GM12878 (cell line): ENCODE measurements at regions of chr19 and their contacts with region 1.

Region 1: GRCh38 chr19:45730389-45731288 is at the start of gene FBXO46:
- DNase-seq: peak; percentile 96
- ATAC-seq: peak; percentile 98
- H3K4me3 ChIP-seq: peak within 1 kb of the TSS; percentile 97
- H3K27ac ChIP-seq: peak within 1 kb of the TSS; percentile 90
- H3K4me1 ChIP-seq: peaks cover 4% of the 10 kb centered on the region; the same call in 1 of the 2 replicates
- H3K27me3 ChIP-seq: no peaks in the 10 kb centered on the region
- CTCF ChIP-seq: peak; percentile 28 to 40 (median 35); a peak in 5 of 6 replicates
- EP300 ChIP-seq: no peak
- POLR2A ChIP-seq: peak; percentile 87
- RAD21 ChIP-seq: peak; percentile 31; the same call in 1 of the 2 replicates
- polyA plus RNA-seq, gene FBXO46: 2.5 to 7.1 TPM

Region 2: GRCh38 chr19:44912854-44913253 is 817.8 kb before region 1 on chr19:
- CTCF ChIA-PET with region 1: no interaction called
- POLR2A ChIA-PET with region 1: no interaction called
- RAD21 ChIA-PET with region 1: no interaction called
- SMC1A ChIA-PET with region 1: no interaction called
- in situ Hi-C with region 1: no loop called
- intact Hi-C with region 1: no loop called
- DNase-seq: no peak
- ATAC-seq: no peak
- H3K4me3 ChIP-seq: no peak overlapping the region
- H3K27ac ChIP-seq: no peak overlapping the region
- H3K4me1 ChIP-seq: 0 out of 2 replicates have a peak, but pooled peaks cover 3% of the 10 kb centered on the region
- H3K27me3 ChIP-seq: no peaks in the 10 kb centered on the region; a peak in 1 of 4 replicates
- CTCF ChIP-seq: no peak
- EP300 ChIP-seq: no peak
- POLR2A ChIP-seq: no peak
- RAD21 ChIP-seq: no peak

Region 3: DNA sequence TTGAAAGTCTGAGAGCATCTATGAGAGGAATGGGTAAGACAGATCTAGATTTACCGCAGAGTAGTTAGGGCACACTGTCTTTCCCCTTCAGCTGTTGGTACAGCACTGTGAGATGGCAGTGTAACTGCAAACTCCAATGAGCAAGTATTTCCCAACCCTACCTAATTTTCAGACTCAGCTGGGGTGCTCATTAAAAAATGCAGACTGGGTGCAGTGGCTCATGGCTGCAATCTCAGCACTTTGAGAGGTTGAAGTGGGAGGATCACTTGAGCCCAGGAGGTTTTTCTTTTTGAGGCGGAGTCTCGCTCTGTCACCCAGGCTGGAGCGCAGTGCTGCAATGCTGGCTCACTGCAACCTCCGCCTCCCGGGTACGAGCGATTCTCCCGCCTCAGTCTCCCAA is 25.5 kb before region 1 on chr19:
- CTCF ChIA-PET with region 1: interaction called, 5 read pairs
- POLR2A ChIA-PET with region 1: interaction called, 22 read pairs
- RAD21 ChIA-PET with region 1: interaction called, 20 read pairs
- SMC1A ChIA-PET with region 1: interaction called, 29 read pairs
- in situ Hi-C with region 1: no loop called
- intact Hi-C with region 1: loop called (anchors 1 kb)
- DNase-seq: no peak
- ATAC-seq: no peak
- H3K4me3 ChIP-seq: no peak overlapping the region
- H3K27ac ChIP-seq: 0 out of 2 replicates have a peak overlapping the region, but pooled peaks have one; percentile 26
- H3K4me1 ChIP-seq: peaks cover 19% of the 10 kb centered on the region
- H3K27me3 ChIP-seq: no peaks in the 10 kb centered on the region
- CTCF ChIP-seq: no peak
- EP300 ChIP-seq: no peak
- POLR2A ChIP-seq: no peak
- RAD21 ChIP-seq: no peak

Region 4: DNA sequence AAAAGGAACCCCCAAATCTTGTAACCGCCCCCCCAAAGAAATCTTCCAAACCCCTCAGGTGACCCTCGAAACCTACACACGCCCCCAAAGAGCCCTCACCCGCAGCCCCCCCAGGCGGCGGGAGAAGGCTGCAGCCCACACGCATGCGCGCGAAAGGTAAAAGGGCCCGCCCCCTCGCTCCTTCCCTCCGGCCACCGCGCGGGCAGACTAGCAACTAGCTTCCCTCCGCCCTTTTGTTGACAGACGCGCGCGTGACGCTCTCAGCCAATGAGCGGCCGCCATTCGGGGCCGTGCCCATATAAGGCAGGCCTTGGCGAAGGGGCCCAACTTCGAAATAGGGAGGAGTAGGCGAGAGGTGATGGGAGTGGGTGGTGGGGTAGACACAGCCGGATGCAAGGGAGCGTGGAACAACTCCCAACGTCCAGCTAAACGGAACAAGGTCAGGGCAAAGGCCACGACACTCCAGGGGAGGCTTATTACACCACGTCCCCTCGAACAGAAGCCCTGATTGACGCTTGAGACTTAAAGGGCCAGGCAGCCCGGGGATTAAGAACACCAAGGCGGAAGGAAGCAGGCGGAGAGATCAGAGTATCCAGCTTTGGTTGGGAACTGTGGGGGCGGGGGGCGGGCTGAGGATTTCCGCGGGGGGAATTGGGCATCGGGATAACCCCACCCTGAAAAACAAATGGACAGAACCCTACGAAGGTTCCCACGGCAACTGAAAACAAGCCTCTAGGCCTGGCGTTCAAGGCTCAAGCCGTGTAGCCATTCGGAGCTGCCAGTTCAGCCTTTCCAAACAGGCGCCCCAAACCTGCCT is 13.3 kb before region 1 on chr19:
- CTCF ChIA-PET with region 1: interaction called, 9 read pairs
- POLR2A ChIA-PET with region 1: interaction called, 58 read pairs
- RAD21 ChIA-PET with region 1: interaction called, 22 read pairs
- SMC1A ChIA-PET with region 1: interaction called, 35 read pairs
- in situ Hi-C with region 1: no loop called
- intact Hi-C with region 1: no loop called
- DNase-seq: peak; percentile 99
- ATAC-seq: peak; percentile 99
- H3K4me3 ChIP-seq: peak overlapping the region; percentile 95
- H3K27ac ChIP-seq: peak overlapping the region; percentile 97
- H3K4me1 ChIP-seq: peaks cover 13% of the 10 kb centered on the region
- H3K27me3 ChIP-seq: no peaks in the 10 kb centered on the region
- CTCF ChIP-seq: peak; percentile 21 to 31 (median 25); a peak in 4 of 6 replicates
- EP300 ChIP-seq: peak in 1 of 2 experiments; percentile 51; a peak in 2 of 4 replicates
- POLR2A ChIP-seq: peak; percentile 70
- RAD21 ChIP-seq: no peak

Region 5: GRCh38 chr19:45753546-45753945 is 22.9 kb after region 1 on chr19:
- CTCF ChIA-PET with region 1: interaction called, 12 read pairs
- POLR2A ChIA-PET with region 1: interaction called, 4 read pairs
- RAD21 ChIA-PET with region 1: no interaction called
- SMC1A ChIA-PET with region 1: no interaction called
- in situ Hi-C with region 1: no loop called
- intact Hi-C with region 1: no loop called
- DNase-seq: no peak
- ATAC-seq: peak; percentile 75
- H3K4me3 ChIP-seq: no peak overlapping the region
- H3K27ac ChIP-seq: no peak overlapping the region
- H3K4me1 ChIP-seq: no peaks in the 10 kb centered on the region
- H3K27me3 ChIP-seq: no peaks in the 10 kb centered on the region
- CTCF ChIP-seq: 0 out of 6 replicates have a peak, but pooled peaks of 2 of the 3 experiments have one; percentile 8 to 11
- EP300 ChIP-seq: no peak
- POLR2A ChIP-seq: no peak
- RAD21 ChIP-seq: no peak

Region 6: DNA sequence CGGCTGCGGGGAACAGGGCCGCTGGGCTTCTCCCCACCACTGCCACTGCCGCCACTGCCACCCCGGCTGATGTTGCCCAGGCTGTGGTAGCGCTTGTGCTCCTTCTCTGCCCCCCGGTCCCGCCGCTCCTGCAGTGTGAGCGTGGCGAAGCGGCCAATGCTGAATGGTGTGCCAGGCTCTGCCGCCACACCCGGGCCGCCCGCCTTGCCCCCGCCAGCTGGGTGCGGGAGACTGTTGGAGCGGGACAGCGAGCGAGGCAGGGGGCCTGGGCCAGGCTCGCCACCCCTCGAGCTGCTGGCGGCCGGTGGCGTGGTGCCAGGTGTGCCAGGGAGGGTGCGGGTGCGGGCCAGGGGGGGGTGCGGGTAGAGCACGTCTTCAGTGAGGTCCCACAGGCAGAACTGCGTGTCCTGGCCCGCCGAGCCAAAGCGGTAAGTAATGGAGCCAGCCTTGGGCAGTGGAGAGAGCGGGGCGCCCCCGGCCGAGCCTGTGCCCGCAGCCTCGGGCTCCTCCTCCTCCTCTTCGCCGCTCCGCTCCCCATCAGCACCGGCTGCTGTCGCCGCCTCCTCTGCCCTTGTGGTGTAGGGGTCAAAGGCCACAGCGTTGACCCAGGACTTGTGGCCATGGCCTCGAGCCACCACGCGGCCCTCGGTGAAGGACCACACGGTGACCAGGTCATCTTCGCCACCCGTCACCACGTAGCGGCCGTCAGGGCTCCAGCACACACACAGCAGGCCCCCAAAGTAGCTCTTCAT is 55.3 kb after region 1 on chr19:
- CTCF ChIA-PET with region 1: no interaction called
- POLR2A ChIA-PET with region 1: no interaction called
- RAD21 ChIA-PET with region 1: no interaction called
- SMC1A ChIA-PET with region 1: no interaction called
- in situ Hi-C with region 1: no loop called
- intact Hi-C with region 1: no loop called
- DNase-seq: no peak
- ATAC-seq: no peak
- H3K4me3 ChIP-seq: no peak overlapping the region
- H3K27ac ChIP-seq: no peak overlapping the region
- H3K4me1 ChIP-seq: peaks cover 5% of the 10 kb centered on the region
- H3K27me3 ChIP-seq: no peaks in the 10 kb centered on the region
- CTCF ChIP-seq: no peak
- EP300 ChIP-seq: no peak
- POLR2A ChIP-seq: peak; percentile 51; the same call in 1 of the 2 replicates
- RAD21 ChIP-seq: no peak

Region 7: GRCh38 chr19:45824041-45824471 is 93.4 kb after region 1 on chr19:
- CTCF ChIA-PET with region 1: no interaction called
- POLR2A ChIA-PET with region 1: no interaction called
- RAD21 ChIA-PET with region 1: no interaction called
- SMC1A ChIA-PET with region 1: no interaction called
- in situ Hi-C with region 1: no loop called
- intact Hi-C with region 1: no loop called
- DNase-seq: no peak
- ATAC-seq: no peak
- H3K4me3 ChIP-seq: no peak overlapping the region
- H3K27ac ChIP-seq: no peak overlapping the region
- H3K4me1 ChIP-seq: no peaks in the 10 kb centered on the region; the same call in 1 of the 2 replicates
- H3K27me3 ChIP-seq: no peaks in the 10 kb centered on the region
- CTCF ChIP-seq: no peak
- EP300 ChIP-seq: no peak
- POLR2A ChIP-seq: no peak
- RAD21 ChIP-seq: no peak